Activated T-helper 1 cell treated with anti-CD3 and anti-CD28 coated beads, Interleukin-12 subunit alpha, Interleukin-12 subunit beta, Interleukin-2, Interleukin-4 antibody, amounts not matched to agents 30 ng/mL and 10 ng/mL and 1 ng/mL, durations not matched to agents 14 hours and 24 hours and 36 hours (primary cell): ENCODE measurements at regions of chr3 and their contacts with region 1.

Region 1: GRCh38 chr3:9792405-9793160 is at the starts of genes ARPC4 and TADA3:
- DNase-seq: peak; percentile 89
- H3K4me3 Mint-ChIP-seq: peak within 1 kb of the TSS; percentile 99
- H3K27ac Mint-ChIP-seq: peak within 1 kb of the TSS; percentile 100
- H3K4me1 Mint-ChIP-seq: peaks cover 57% of the 10 kb centered on the region
- H3K27me3 Mint-ChIP-seq: no peaks in the 10 kb centered on the region
- total RNA-seq, gene ARPC4: 268 and 273 TPM in 2 replicates
- total RNA-seq, gene TADA3: 63.4 and 63.6 TPM in 2 replicates

Region 2: GRCh38 chr3:8963137-8963869 is 829.3 kb before region 1 on chr3 and contains the start of gene RAD18:
- intact Hi-C with region 1: loop called (anchors 5 kb)
- DNase-seq: peak; percentile 91
- H3K4me3 Mint-ChIP-seq: peak within 1 kb of the TSS; percentile 98
- H3K27ac Mint-ChIP-seq: peak within 1 kb of the TSS; percentile 97
- H3K4me1 Mint-ChIP-seq: peaks cover 62% of the 10 kb centered on the region
- H3K27me3 Mint-ChIP-seq: peaks cover 7% of the 10 kb centered on the region
- total RNA-seq, gene RAD18: 52.8 and 54.2 TPM in 2 replicates

Region 3: GRCh38 chr3:9749645-9750555 is 42.7 kb before region 1 on chr3 and contains the start of gene OGG1:
- intact Hi-C with region 1: loop called (anchors 1 kb)
- DNase-seq: peak; percentile 96
- H3K4me3 Mint-ChIP-seq: peak within 1 kb of the TSS; percentile 96
- H3K27ac Mint-ChIP-seq: peak within 1 kb of the TSS; percentile 95
- H3K4me1 Mint-ChIP-seq: peaks cover 61% of the 10 kb centered on the region
- H3K27me3 Mint-ChIP-seq: no peaks in the 10 kb centered on the region
- total RNA-seq, gene OGG1: 40.2 and 40.6 TPM in 2 replicates

Region 4: DNA sequence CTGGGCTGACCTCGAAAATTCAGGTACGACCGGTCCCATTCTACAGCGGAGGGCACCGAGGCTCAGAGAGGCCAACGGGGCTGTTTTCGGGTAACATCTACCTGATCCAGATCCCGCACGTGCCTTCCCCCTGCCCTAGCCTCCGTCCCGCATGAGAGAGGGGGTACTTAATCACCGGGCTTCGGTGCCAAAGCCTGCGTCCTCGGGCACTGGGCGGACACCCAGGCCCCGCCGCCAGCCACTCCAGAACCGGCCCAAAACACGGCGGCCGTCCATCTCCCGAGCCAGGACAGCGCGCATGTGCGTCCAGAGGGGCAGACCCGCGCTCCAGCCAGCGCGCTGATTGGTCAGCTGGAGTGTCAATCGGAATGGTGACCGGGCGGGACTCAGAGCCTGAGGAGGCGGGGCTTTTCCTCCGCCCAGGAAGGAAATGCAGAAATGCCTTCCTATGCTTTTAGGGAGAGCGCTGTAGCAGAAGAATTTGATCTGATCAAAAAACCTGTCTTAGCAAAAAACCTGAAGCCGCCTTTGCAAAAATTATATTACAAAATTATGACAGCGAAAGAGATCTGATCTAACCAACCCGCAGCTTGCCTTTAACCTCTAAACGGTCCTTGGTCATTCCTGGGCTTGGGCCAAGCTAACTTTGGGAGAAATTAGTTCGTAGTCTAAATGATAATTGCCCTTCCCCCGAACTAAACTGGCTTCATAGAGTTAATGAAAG is 51.3 kb after region 1 on chr3 and contains the start of gene RPUSD3:
- intact Hi-C with region 1: loop called (anchors 2 kb)
- DNase-seq: peak; percentile 95
- H3K4me3 Mint-ChIP-seq: peak within 1 kb of the TSS; percentile 98
- H3K27ac Mint-ChIP-seq: peak within 1 kb of the TSS; percentile 91
- H3K4me1 Mint-ChIP-seq: peaks cover 28% of the 10 kb centered on the region
- H3K27me3 Mint-ChIP-seq: no peaks in the 10 kb centered on the region
- total RNA-seq, gene RPUSD3: 79.2 and 79.5 TPM in 2 replicates

Region 5: GRCh38 chr3:10026084-10026890 is 233.7 kb after region 1 on chr3 and contains the start of gene FANCD2:
- intact Hi-C with region 1: loop called (anchors 1 kb)
- DNase-seq: peak; percentile 90
- H3K4me3 Mint-ChIP-seq: peak within 1 kb of the TSS; percentile 98
- H3K27ac Mint-ChIP-seq: peak within 1 kb of the TSS; percentile 99
- H3K4me1 Mint-ChIP-seq: peaks cover 33% of the 10 kb centered on the region
- H3K27me3 Mint-ChIP-seq: no peaks in the 10 kb centered on the region
- total RNA-seq, gene FANCD2: 63.4 and 64.2 TPM in 2 replicates

Region 6: GRCh38 chr3:10322352-10322710 is 529.7 kb after region 1 on chr3:
- intact Hi-C with region 1: loop called (anchors 2 kb)
- DNase-seq: peak; percentile 24
- H3K4me3 Mint-ChIP-seq: peak overlapping the region; percentile 30
- H3K27ac Mint-ChIP-seq: no peak overlapping the region
- H3K4me1 Mint-ChIP-seq: peaks cover 30% of the 10 kb centered on the region
- H3K27me3 Mint-ChIP-seq: peaks cover 13% of the 10 kb centered on the region

Region 7: DNA sequence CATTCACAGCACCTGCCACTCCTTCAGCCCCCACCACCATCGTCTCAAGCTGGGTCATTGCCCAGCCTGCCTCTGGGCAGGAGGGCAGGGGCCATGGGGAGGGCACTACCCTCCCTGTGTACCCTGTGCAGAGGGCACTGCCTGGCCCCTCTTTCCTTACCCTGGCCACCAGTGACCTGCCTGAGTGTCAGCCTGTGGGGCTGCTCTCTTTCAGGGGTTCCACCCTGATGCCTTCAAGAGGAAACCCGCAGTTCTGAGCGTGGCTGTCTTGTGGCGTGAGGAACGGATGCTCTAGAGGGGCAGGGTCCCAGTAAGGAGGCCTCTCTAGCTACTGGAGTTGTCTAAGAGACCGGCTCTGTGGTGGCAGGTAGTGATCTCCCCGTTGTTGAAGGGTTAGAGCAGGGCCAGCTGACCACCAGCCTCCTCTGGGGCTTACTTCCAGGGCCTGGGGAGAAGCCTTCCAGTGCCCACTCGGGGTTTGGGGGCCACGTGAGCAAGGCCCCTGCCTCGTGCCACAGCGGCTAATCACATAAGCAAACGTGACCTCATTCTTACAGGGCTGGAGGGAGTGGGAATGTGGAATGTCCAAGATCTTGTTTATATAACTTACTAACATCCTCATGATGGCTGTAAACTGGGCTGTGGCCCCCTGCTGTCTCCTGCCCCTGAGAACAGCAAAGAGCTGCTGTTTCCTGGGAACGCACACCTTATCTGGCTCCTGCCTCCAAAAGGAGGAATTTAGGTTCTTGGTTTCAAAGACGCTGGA is 559.7 kb after region 1 on chr3:
- intact Hi-C with region 1: no loop called
- DNase-seq: no peak
- H3K4me3 Mint-ChIP-seq: no peak overlapping the region
- H3K27ac Mint-ChIP-seq: no peak overlapping the region
- H3K4me1 Mint-ChIP-seq: no peaks in the 10 kb centered on the region
- H3K27me3 Mint-ChIP-seq: peaks cover 2% of the 10 kb centered on the region